Panc1 (cell line): ENCODE measurements at regions of chr22 and their contacts with region 1.

Region 1: DNA sequence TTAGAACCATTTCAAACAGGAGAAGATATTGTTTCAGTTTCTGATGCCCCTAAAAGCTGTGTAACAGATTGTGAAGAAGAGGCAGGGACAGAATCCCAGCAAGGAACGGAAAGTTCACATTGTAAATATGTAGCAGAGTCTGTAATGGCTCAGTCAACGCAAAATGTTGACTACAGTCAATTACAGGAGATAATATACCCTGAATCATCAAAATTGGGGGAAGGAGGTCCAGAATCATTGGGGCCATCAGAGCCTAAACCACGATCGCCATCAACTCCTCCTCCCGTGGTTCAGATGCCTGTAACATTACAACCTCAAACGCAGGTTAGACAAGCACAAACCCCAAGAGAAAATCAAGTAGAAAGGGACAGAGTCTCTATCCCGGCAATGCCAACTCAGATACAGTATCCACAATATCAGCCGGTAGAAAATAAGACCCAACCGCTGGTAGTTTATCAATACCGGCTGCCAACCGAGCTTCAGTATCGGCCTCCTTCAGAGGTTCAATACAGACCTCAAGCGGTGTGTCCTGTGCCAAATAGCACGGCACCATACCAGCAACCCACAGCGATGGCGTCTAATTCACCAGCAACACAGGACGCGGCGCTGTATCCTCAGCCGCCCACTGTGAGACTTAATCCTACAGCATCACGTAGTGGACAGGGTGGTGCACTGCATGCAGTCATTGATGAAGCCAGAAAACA is 40.8 kb downstream of the IGLL1 start:
- DNase-seq: peak; percentile 61
- ATAC-seq: peak; percentile 98
- H3K4me3 ChIP-seq: peak overlapping the region; percentile 9 to 21; a peak in 3 of 4 replicates
- H3K27ac ChIP-seq: peak overlapping the region; percentile 44; the same call in 1 of the 2 replicates
- H3K4me1 ChIP-seq: no peaks in the 10 kb centered on the region; the same call in 1 of the 2 replicates
- H3K27me3 ChIP-seq: no peaks in the 10 kb centered on the region
- CTCF ChIP-seq: peak; percentile 94

Region 2: GRCh38 chr22:23402275-23403151 is 136.8 kb before region 1 on chr22:
- CTCF ChIA-PET with region 1: no interaction called
- POLR2A ChIA-PET with region 1: no interaction called
- in situ Hi-C with region 1: no loop called
- intact Hi-C with region 1: loop called (anchors 10 kb)
- DNase-seq: no peak
- ATAC-seq: peak; percentile 92
- H3K4me3 ChIP-seq: peak overlapping the region; percentile 39 to 43
- H3K27ac ChIP-seq: peak overlapping the region; percentile 54; the same call in 1 of the 2 replicates
- H3K4me1 ChIP-seq: no peaks in the 10 kb centered on the region; the same call in 1 of the 2 replicates
- H3K27me3 ChIP-seq: no peaks in the 10 kb centered on the region
- CTCF ChIP-seq: peak; percentile 84

Region 3: DNA sequence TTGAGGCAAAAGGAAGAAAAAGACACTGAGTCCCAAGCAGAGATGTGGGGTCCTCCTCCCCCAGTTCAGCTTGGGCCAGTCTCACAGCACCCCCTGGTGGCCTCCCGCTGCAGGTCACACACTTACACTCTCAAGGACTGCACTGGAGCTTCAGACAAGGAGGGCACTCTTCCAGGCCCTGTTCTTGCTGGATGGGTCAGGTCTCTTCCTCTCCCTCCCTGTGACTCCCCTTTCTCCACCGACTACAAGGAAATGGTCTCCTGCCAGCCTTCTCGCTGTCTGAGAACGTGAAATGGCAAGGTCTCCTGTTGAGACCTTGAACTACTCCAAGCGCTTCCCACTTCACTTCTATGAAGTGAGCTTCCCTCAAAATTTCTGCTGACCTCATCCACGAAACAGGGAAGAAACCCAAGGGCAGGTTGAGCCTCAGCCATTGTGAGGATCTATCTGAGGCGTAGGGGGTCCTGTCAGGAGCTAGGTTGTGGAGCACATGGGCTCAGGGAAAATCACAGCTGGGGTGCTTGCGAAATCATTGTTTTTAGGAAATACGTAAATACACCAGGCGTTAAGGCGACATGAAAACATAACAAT is 52.0 kb after region 1 on chr22:
- CTCF ChIA-PET with region 1: interaction called, 4 read pairs
- POLR2A ChIA-PET with region 1: no interaction called
- in situ Hi-C with region 1: no loop called
- intact Hi-C with region 1: loop called (anchors 1 kb)
- DNase-seq: peak; percentile 38
- ATAC-seq: peak; percentile 89
- H3K4me3 ChIP-seq: no peak overlapping the region
- H3K27ac ChIP-seq: no peak overlapping the region
- H3K4me1 ChIP-seq: no peaks in the 10 kb centered on the region
- H3K27me3 ChIP-seq: no peaks in the 10 kb centered on the region
- CTCF ChIP-seq: peak; percentile 89

Region 4: DNA sequence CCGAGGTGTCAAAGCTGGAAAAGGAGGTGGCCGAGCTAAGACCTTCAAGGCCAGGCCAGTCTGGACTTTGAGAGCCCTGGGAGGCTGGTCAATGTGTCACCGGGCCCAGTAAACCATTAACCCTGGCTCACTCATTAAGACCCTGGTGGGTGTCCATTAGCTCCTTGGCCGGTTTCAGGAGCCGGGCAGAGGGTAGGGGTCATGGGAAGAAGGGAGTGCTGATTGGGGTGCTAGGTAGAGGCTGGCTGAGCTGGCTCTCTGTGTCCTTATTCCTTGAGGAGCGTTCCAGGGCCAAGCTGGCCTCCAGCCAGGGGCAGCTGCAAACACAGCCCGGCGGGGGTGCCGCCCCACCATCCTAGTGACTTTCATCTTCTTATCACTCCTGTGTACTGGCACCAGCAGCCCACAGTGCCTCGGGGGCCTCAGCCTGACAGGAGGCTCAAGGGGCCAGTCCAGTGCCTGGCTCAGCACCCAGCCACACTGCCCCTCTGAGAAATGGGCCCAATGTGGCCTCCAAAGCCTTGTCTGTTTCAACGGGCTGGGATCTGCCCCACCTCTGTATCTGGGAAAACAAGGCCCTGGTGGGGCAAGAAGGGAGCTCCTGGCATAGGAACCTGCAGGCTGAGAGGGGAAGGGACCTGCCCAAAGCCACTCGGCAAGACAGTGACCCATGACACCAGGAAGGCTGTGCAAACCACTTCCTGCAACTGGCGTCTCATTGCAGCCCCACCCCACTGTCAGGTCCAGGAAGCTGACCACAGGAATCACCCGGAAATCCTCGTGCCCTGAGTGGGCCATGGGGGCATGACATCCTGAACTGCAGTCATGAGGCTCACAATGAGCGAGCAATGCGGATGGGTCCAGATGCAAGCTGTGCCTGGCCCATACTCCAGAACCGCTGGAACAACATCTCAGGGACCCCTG is 136.5 kb after region 1 on chr22:
- CTCF ChIA-PET with region 1: no interaction called
- POLR2A ChIA-PET with region 1: no interaction called
- in situ Hi-C with region 1: no loop called
- intact Hi-C with region 1: no loop called
- DNase-seq: no peak
- ATAC-seq: no peak
- H3K4me3 ChIP-seq: no peak overlapping the region
- H3K27ac ChIP-seq: no peak overlapping the region
- H3K4me1 ChIP-seq: no peaks in the 10 kb centered on the region
- H3K27me3 ChIP-seq: no peaks in the 10 kb centered on the region
- CTCF ChIP-seq: no peak